ENCODE measurements at regions of chr15 and their contacts with region 1.

Region 1: GRCh38 chr15:73950831-73951561 is 24.7 kb downstream of the LOXL1 start:
- DNase-seq: peak; percentile 63 to 66 (median 64)
- H3K4me3 ChIP-seq: no peak overlapping the region
- H3K4me3 Mint-ChIP-seq: peak overlapping the region in 2 of 8 donors; percentile 39 to 59
- H3K27ac ChIP-seq: peak overlapping the region; percentile 5
- H3K27ac Mint-ChIP-seq: peak overlapping the region; percentile 19 to 97 (median 94)
- H3K4me1 ChIP-seq: peaks cover 5% of the 10 kb centered on the region
- H3K4me1 Mint-ChIP-seq: peaks cover 3 to 22% (median 6%) of the 10 kb centered on the region in 4 donors
- H3K27me3 ChIP-seq: no peaks in the 10 kb centered on the region
- H3K27me3 Mint-ChIP-seq: no peaks in the 10 kb centered on the region

Region 2: GRCh38 chr15:73700041-73700842 is 250.8 kb before region 1 on chr15:
- CTCF ChIA-PET with region 1: no interaction called
- POLR2A ChIA-PET with region 1: no interaction called
- intact Hi-C with region 1: no loop called
- DNase-seq: peak; percentile 70 to 74 (median 73)
- H3K4me3 ChIP-seq: no peak overlapping the region
- H3K4me3 Mint-ChIP-seq: peak overlapping the region in 1 of 8 donors; percentile 1
- H3K27ac ChIP-seq: no peak overlapping the region
- H3K27ac Mint-ChIP-seq: peak overlapping the region in 1 of 7 donors; percentile 69
- H3K4me1 ChIP-seq: peaks cover 20% of the 10 kb centered on the region
- H3K4me1 Mint-ChIP-seq: peaks cover 17 to 29% (median 19%) of the 10 kb centered on the region in 4 donors
- H3K27me3 ChIP-seq: no peaks in the 10 kb centered on the region
- H3K27me3 Mint-ChIP-seq: peaks cover 14 to 26% of the 10 kb centered on the region in 2 donors

Region 3: DNA sequence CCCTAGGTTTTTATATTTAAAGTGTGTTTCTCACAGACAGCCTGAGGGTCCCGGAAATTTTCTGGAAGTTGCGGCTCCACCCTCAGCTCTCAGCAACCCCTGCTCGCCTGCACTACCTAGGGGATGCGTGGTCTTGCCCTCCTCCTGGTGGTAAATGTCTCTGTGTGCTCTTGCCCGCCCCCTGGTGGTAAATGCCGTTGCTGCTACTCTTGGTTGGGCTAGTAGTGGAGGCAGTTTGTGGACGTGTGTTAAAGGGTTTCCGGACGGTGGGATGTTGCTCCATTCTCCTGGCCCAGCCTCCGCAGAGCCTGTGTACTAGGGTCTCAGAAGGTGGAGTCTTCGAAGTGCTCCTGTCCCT is 13.7 kb after region 1 on chr15:
- CTCF ChIA-PET with region 1: interaction called, 168 read pairs
- POLR2A ChIA-PET with region 1: interaction called, 17 read pairs
- intact Hi-C with region 1: loop called (anchors 1 kb)
- DNase-seq: peak; percentile 80 to 87 (median 83)
- H3K4me3 ChIP-seq: peak overlapping the region in 1 of 2 donors; percentile 64
- H3K4me3 Mint-ChIP-seq: peak overlapping the region; percentile 75 to 88 (median 84)
- H3K27ac ChIP-seq: peak overlapping the region; percentile 24
- H3K27ac Mint-ChIP-seq: peak overlapping the region; percentile 43 to 93 (median 77)
- H3K4me1 ChIP-seq: peaks cover 32% of the 10 kb centered on the region
- H3K4me1 Mint-ChIP-seq: peaks cover 24 to 41% (median 31%) of the 10 kb centered on the region in 4 donors
- H3K27me3 ChIP-seq: no peaks in the 10 kb centered on the region
- H3K27me3 Mint-ChIP-seq: no peaks in the 10 kb centered on the region

Region 4: GRCh38 chr15:74053941-74054529 is 103.0 kb after region 1 on chr15:
- CTCF ChIA-PET with region 1: interaction called, 15 read pairs
- POLR2A ChIA-PET with region 1: no interaction called
- intact Hi-C with region 1: no loop called
- DNase-seq: peak; percentile 57 to 68 (median 61)
- H3K4me3 ChIP-seq: no peak overlapping the region
- H3K4me3 Mint-ChIP-seq: peak overlapping the region in 4 of 8 donors; percentile 17 to 46 (median 32)
- H3K27ac ChIP-seq: no peak overlapping the region
- H3K27ac Mint-ChIP-seq: peak overlapping the region in 1 of 7 donors; percentile 72
- H3K4me1 ChIP-seq: peaks cover 7% of the 10 kb centered on the region
- H3K4me1 Mint-ChIP-seq: peaks cover 2 to 18% (median 7%) of the 10 kb centered on the region in 4 donors
- H3K27me3 ChIP-seq: no peaks in the 10 kb centered on the region
- H3K27me3 Mint-ChIP-seq: peaks cover 0 to 2% of the 10 kb centered on the region in 2 donors

Region 5: DNA sequence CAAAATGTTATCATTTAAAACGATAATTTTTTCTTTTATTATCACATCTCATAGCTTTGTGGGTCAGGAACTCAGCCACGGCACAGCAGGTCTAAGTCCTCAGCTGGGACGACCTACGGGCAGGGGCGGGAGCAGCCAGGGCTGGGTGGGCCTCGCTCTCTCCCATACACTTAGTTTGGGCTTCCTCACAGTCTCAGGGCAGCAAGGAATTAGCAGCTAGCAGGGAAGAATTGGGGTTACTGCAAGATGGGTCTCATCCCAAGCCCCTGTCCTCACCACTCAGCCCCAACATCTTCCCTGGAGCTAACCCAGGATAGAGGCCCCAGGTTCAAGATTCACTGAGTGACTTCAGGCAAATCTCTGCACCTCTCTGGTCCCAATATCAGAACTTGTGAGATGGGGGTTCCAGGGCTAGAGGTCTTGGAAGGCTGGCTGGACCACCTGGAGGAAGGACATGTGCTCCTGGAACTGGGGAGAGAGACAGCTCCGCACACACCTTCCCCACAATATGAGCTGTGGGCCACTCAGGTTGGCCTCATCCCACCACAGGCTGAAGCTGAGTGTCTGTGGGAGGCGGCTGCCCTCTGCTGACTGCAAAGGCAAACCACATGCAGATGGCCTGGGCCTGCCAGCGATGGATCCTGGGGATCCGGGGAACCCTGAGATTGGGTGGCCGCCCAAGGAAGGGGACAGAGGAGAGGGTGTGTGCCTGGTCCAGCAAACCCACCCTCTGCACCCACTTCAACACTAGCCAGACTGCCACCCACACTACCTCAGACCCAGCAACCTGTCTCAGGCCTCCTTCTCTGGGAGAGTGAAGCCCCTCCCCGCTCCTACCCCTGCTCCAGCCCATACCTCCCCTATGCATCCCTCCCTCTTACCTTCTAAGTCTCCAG is 371.4 kb after region 1 on chr15:
- CTCF ChIA-PET with region 1: interaction called, 3 read pairs
- POLR2A ChIA-PET with region 1: no interaction called
- intact Hi-C with region 1: loop called (anchors 1 kb)
- DNase-seq: peak; percentile 38 to 54 (median 45)
- H3K4me3 ChIP-seq: no peak overlapping the region
- H3K4me3 Mint-ChIP-seq: no peak overlapping the region
- H3K27ac ChIP-seq: no peak overlapping the region
- H3K27ac Mint-ChIP-seq: no peak overlapping the region
- H3K4me1 ChIP-seq: no peaks in the 10 kb centered on the region
- H3K4me1 Mint-ChIP-seq: no peaks in the 10 kb centered on the region
- H3K27me3 ChIP-seq: no peaks in the 10 kb centered on the region
- H3K27me3 Mint-ChIP-seq: peaks cover 2 to 6% of the 10 kb centered on the region in 2 donors

Measured in CD4-positive, alpha-beta memory T cell (primary cell).